Caco-2 (cell line): ENCODE measurements at regions of chr2 and their contacts with region 1.

Region 1: DNA sequence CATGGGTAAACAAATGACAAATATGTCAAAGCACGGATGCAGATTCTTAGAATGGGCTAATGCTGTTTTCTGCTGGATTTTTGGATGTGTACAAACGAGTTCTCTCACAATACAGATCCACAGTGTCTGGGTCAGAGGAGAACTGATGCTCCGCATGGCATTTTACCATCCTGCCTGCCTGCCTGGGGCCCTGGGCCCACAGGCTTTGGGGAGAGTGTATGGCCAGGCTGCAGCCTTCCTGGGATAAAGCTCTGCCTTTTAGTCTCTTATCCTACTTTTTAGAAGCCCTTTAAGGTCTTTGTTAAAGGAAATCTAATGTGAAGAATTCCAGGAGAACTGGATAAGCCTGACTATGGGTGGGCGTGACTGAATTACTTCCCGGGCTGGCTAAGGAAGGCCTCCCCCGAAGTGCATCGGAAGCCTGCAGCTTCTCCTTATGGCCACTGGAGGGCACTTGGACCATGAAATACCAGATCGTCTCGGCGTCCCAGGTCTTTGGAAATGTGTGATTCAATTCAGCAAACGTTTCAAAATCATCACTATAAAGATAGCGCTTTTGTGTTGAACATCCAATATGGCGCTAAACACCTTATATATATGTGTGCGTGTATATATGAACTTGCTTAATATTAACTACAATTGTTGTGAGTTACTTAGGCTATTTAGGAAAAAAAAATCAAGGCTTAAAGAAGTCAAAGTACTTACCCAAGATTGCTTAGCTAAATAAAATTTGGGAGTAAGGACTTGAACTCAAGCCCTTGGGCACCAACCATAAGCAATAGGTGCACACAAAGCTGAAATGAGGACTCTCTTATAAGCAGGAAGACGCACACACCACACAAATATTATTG is 15.2 kb upstream of the DNPEP start:
- DNase-seq: peak; percentile 78 to 80
- H3K4me3 ChIP-seq: no peak overlapping the region
- H3K4me3 Mint-ChIP-seq: no peak overlapping the region
- H3K27ac Mint-ChIP-seq: no peak overlapping the region
- H3K4me1 ChIP-seq: peaks cover 28% of the 10 kb centered on the region
- H3K4me1 Mint-ChIP-seq: peaks cover 28% of the 10 kb centered on the region
- H3K27me3 ChIP-seq: no peaks in the 10 kb centered on the region
- H3K27me3 Mint-ChIP-seq: no peaks in the 10 kb centered on the region
- CTCF ChIP-seq: peak; percentile 82 to 95

Region 2: GRCh38 chr2:218832520-218832919 is 570.4 kb before region 1 on chr2:
- CTCF ChIA-PET with region 1: no interaction called
- POLR2A ChIA-PET with region 1: no interaction called
- intact Hi-C with region 1: no loop called
- DNase-seq: no peak
- H3K4me3 ChIP-seq: no peak overlapping the region
- H3K4me3 Mint-ChIP-seq: no peak overlapping the region
- H3K27ac Mint-ChIP-seq: no peak overlapping the region
- H3K4me1 ChIP-seq: no peaks in the 10 kb centered on the region
- H3K4me1 Mint-ChIP-seq: no peaks in the 10 kb centered on the region
- H3K27me3 ChIP-seq: peaks cover 1% of the 10 kb centered on the region; the same call in 1 of the 2 replicates
- H3K27me3 Mint-ChIP-seq: peaks cover 3% of the 10 kb centered on the region
- CTCF ChIP-seq: no peak

Region 3: GRCh38 chr2:219278655-219279516 is 124.0 kb before region 1 on chr2 and contains the start of gene DNAJB2:
- CTCF ChIA-PET with region 1: no interaction called
- POLR2A ChIA-PET with region 1: no interaction called
- intact Hi-C with region 1: no loop called
- DNase-seq: peak; percentile 98
- H3K4me3 ChIP-seq: peak within 1 kb of the TSS; percentile 85
- H3K4me3 Mint-ChIP-seq: peak within 1 kb of the TSS; percentile 98
- H3K27ac Mint-ChIP-seq: peak within 1 kb of the TSS; percentile 98
- H3K4me1 ChIP-seq: peaks cover 36% of the 10 kb centered on the region
- H3K4me1 Mint-ChIP-seq: peaks cover 13% of the 10 kb centered on the region
- H3K27me3 ChIP-seq: no peaks in the 10 kb centered on the region
- H3K27me3 Mint-ChIP-seq: no peaks in the 10 kb centered on the region
- CTCF ChIP-seq: no peak
- total RNA-seq, gene DNAJB2: 60.6 and 61.2 TPM in 2 replicates

Region 4: GRCh38 chr2:219433666-219434467 is 31.0 kb after region 1 on chr2:
- CTCF ChIA-PET with region 1: interaction called, 4 read pairs
- POLR2A ChIA-PET with region 1: interaction called, 3 read pairs
- intact Hi-C with region 1: loop called (anchors 1 kb)
- DNase-seq: peak in 1 of 2 experiments; percentile 52
- H3K4me3 ChIP-seq: no peak overlapping the region
- H3K4me3 Mint-ChIP-seq: no peak overlapping the region
- H3K27ac Mint-ChIP-seq: no peak overlapping the region
- H3K4me1 ChIP-seq: no peaks in the 10 kb centered on the region
- H3K4me1 Mint-ChIP-seq: no peaks in the 10 kb centered on the region
- H3K27me3 ChIP-seq: no peaks in the 10 kb centered on the region
- H3K27me3 Mint-ChIP-seq: no peaks in the 10 kb centered on the region
- CTCF ChIP-seq: peak in 1 of 2 experiments; percentile 16